ENCODE measurements at regions of chr12 and their contacts with region 1.

Region 1: DNA sequence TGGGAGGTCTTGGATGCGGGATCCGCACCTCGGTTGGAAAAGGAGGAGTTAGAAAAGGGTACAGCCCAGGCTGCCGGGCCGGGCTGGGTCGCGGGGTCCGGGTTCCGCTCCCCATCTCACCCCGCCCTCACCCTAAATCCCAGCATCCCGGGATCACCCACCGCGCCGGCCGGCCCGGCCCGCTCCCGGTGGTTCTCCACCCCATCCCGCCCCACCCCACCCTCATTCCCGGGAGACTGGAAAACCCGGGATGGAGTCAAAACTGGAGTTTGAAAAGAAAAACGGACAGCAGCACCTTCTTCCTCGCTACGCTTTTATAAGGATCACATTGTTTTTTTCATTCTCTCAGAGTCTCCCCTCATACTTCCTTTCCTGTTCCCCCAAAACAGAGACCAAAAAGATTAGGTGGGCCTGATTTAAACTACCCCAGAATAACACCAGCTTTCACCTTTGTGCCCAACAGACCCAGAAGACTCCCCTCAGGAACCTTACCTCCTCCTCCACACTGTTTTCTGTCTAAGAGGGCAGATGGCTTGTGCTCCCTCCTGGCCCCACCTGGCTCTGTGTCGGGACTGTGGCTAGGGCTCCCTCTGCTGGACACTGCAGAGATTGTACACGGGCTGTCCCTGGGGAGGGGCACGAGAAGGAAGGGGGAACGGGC is 2.8 kb downstream of the GLI1 start:
- DNase-seq: peak; percentile 94
- ATAC-seq: peak; percentile 80
- H3K4me3 Mint-ChIP-seq: peak overlapping the region; percentile 82
- H3K27ac Mint-ChIP-seq: peak overlapping the region; percentile 58
- H3K4me1 Mint-ChIP-seq: peaks cover 46% of the 10 kb centered on the region
- H3K27me3 Mint-ChIP-seq: peaks cover 18% of the 10 kb centered on the region

Region 2: GRCh38 chr12:57238854-57239554 is 223.4 kb before region 1 on chr12:
- CTCF ChIA-PET with region 1: interaction called, 144 read pairs
- DNase-seq: peak; percentile 92
- ATAC-seq: peak; percentile 71
- H3K4me3 Mint-ChIP-seq: peak overlapping the region; percentile 84
- H3K27ac Mint-ChIP-seq: peak overlapping the region; percentile 79
- H3K4me1 Mint-ChIP-seq: peaks cover 50% of the 10 kb centered on the region
- H3K27me3 Mint-ChIP-seq: peaks cover 52% of the 10 kb centered on the region

Region 3: DNA sequence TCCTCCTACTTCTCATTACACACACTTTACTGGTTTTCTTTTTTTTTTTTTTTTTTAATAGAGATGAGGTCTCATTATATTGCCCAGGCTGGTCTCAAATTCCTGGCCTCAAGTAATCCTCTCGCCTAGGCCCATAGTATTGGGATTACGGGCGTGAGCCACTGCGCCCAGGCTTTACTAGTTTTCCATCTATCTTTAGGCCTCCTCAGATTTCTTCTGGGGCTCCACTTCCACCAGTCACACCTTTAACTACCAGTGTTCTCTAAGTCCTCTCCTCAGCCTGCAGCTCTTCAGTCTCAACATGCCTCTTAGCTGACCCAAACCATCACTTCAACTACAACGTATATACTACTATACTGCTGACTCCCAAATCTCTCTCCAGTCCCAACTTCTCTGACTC is 41.9 kb before region 1 on chr12:
- CTCF ChIA-PET with region 1: interaction called, 13 read pairs
- DNase-seq: no peak
- ATAC-seq: no peak
- H3K4me3 Mint-ChIP-seq: no peak overlapping the region
- H3K27ac Mint-ChIP-seq: no peak overlapping the region
- H3K4me1 Mint-ChIP-seq: no peaks in the 10 kb centered on the region
- H3K27me3 Mint-ChIP-seq: no peaks in the 10 kb centered on the region

Region 4: DNA sequence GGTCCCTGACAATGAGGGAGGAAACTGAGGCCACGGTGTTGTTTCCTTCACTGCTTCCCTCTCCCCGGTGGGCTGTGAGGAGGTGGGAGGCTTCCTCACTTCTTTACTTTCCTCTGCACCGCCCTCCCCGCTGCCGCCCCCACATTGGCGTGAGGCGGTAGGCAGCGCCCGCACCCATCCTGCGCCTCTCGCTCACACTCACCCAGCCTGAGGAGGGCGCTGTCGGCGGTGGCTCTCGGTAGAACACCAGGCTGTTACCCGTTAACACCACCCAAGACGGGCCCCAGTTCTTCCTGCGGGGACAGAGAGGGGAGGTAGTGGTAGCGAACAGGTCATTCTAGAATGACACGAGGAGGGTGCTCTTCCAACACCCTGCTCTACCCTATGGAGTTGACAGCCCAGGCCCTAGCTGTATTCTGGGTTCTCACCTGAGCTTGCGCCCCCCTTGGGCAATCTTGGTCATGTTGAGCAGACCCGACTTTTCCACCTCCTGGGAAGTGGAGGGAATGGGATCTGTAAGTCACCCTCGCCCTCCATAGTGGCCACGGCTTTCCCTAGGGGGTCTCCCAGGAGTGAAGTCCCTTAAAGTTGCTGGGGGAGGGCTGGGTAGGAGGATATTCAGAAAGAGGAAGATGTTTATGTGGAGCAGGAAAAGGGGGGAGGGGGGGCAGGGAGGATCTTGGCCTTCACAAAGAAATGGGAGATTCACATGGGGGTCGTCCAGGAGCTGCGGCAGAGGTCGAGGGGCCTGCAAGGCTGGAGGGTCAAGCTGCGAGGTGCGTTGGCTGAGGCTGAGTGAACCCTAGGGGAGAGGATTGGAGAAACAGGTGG is 14.0 kb after region 1 on chr12:
- CTCF ChIA-PET with region 1: interaction called, 193 read pairs
- DNase-seq: peak; percentile 89
- ATAC-seq: peak; percentile 25
- H3K4me3 Mint-ChIP-seq: peak overlapping the region; percentile 89
- H3K27ac Mint-ChIP-seq: peak overlapping the region; percentile 100
- H3K4me1 Mint-ChIP-seq: peaks cover 62% of the 10 kb centered on the region
- H3K27me3 Mint-ChIP-seq: no peaks in the 10 kb centered on the region

Region 5: GRCh38 chr12:57611108-57611809 is 148.9 kb after region 1 on chr12 and contains the start of gene ARHGEF25:
- CTCF ChIA-PET with region 1: no interaction called
- DNase-seq: peak; percentile 56
- ATAC-seq: peak; percentile 83
- H3K4me3 Mint-ChIP-seq: peak within 1 kb of the TSS; percentile 53
- H3K27ac Mint-ChIP-seq: no peak within 1 kb of the TSS
- H3K4me1 Mint-ChIP-seq: peaks cover 11% of the 10 kb centered on the region
- H3K27me3 Mint-ChIP-seq: peaks cover 52% of the 10 kb centered on the region
- total RNA-seq, gene ARHGEF25: 0.70 to 0.84 TPM

Region 6: GRCh38 chr12:57621497-57622292 is 159.3 kb after region 1 on chr12:
- CTCF ChIA-PET with region 1: interaction called, 16 read pairs
- DNase-seq: peak; percentile 59
- ATAC-seq: peak; percentile 83
- H3K4me3 Mint-ChIP-seq: peak overlapping the region; percentile 54
- H3K27ac Mint-ChIP-seq: no peak overlapping the region
- H3K4me1 Mint-ChIP-seq: peaks cover 24% of the 10 kb centered on the region
- H3K27me3 Mint-ChIP-seq: peaks cover 98% of the 10 kb centered on the region